HEK293 (cell line): ENCODE measurements at regions of chr12 and their contacts with region 1.

Region 1: GRCh38 chr12:9741726-9742125 is 8.8 kb upstream of the CLECL1 start:
- H3K4me3 ChIP-seq: no peak overlapping the region
- H3K27ac ChIP-seq: no peak overlapping the region
- H3K4me1 ChIP-seq: no peaks in the 10 kb centered on the region
- CTCF ChIP-seq: no peak

Region 2: GRCh38 chr12:9730011-9730410 is 11.7 kb before region 1 on chr12:
- CTCF ChIA-PET with region 1: interaction called, 10 read pairs
- POLR2A ChIA-PET with region 1: no interaction called
- H3K4me3 ChIP-seq: no peak overlapping the region
- H3K27ac ChIP-seq: no peak overlapping the region
- H3K4me1 ChIP-seq: no peaks in the 10 kb centered on the region
- CTCF ChIP-seq: no peak

Region 3: GRCh38 chr12:9813821-9814809 is 72.4 kb after region 1 on chr12:
- CTCF ChIA-PET with region 1: interaction called, 10 read pairs
- POLR2A ChIA-PET with region 1: no interaction called
- H3K4me3 ChIP-seq: peak overlapping the region; percentile 28
- H3K27ac ChIP-seq: no peak overlapping the region
- H3K4me1 ChIP-seq: no peaks in the 10 kb centered on the region
- CTCF ChIP-seq: peak; percentile 91